Posterior vena cava (tissue), 2 donors: ENCODE measurements at regions of chr7 and their contacts with region 1.

Region 1: DNA sequence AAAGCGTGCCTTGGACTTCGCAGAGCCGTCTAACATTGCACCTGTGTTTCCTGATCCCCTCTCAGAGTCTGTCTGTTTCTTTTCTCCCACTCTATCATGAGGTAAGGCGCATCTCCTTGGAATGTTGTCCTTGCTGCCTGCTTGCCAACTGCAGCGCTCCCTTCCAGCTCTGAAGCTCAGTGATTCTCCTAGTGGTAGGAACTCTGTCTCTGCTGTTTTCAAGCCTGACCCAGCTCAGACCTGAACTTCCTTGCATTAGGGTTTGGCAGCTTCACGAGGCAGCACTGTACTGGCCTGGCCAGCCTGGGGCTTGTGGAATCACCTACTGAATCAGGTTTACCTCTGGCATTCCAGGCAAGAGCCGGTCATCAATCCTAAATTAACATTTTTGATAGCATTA is 123.9 kb downstream of the CREB5 start:
- DNase-seq: no peak

Region 2: GRCh38 chr7:28419717-28420116 is 116.5 kb before region 1 on chr7:
- intact Hi-C with region 1: loop called in 1 of 2 experiments (anchors 5 kb)
- DNase-seq: no peak

Region 3: GRCh38 chr7:28490831-28491230 is 45.4 kb before region 1 on chr7:
- intact Hi-C with region 1: no loop called
- DNase-seq: no peak

Region 4: DNA sequence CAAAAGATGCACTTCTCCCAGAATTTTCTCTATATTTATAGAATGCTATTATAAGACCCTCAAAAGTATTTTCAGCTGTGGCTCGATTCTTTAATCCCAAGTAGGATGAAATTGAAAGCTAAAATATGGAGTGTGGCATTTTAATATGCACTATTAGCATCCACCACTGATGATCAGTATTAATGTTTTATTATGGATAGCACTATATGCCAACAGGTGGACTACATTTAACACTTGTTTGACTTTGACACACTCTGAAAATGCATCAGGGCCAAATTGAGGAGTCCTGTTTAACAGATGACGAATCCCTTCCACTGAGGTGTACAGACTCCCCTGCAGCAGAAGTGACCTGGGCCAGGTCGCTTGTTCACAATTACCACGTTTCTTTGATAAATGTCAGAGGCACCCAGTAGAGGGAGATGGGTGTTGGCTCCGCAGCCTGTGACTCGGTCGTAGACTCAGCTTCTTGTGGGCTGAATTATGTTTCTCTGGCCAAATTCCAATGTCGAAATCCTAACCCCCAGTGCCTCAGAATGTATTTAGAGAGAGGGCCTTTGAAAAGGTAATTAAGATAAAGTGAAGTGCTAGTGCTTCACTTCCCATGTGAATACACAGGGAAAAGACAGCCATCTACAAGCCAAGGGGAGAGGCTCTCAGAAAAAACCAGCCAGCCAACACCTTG is 1318.1 kb after region 1 on chr7:
- intact Hi-C with region 1: loop called in 1 of 2 experiments (anchors 5 kb)
- DNase-seq: no peak